ENCODE measurements at regions of chr14 and their contacts with region 1.

Region 1: DNA sequence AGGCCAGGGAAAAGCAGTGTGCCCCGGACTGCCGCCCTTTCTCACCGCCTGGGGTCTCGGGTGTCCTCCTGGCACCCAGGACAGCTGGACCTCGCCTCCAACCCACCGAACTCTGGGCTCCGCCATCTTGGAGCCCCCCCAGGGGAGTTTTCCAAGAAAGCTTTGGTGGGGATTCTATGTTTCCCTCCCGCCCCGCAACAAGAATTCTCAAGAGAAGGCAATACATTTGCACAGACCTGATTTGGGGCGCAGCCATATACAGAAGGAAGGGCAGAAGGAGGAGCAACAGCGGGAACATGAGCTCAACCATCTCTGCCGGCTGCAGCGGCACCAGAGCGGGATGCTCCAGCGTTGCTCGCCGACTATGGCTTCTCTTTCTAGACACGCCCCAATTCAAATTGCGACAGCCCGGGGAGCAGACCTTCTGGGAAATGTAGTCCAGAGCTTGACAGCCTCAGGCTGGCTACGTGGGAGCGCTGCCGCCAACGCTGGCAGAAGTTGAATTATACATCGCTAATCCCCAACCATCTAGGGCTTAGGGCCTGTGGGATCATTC is at the start of gene RDH11:
- DNase-seq: peak; percentile 88
- H3K4me3 ChIP-seq: peak within 1 kb of the TSS; percentile 69 to 93 (median 77)
- H3K27ac ChIP-seq: peak within 1 kb of the TSS; percentile 97
- H3K4me1 ChIP-seq: peaks cover 22% of the 10 kb centered on the region
- H3K27me3 ChIP-seq: no peaks in the 10 kb centered on the region
- CTCF ChIP-seq: no peak
- total RNA-seq, gene RDH11: 99.1 to 145 TPM

Region 2: GRCh38 chr14:67411820-67412421 is 283.6 kb before region 1 on chr14 and contains the start of gene PLEK2:
- CTCF ChIA-PET with region 1: no interaction called
- dilution Hi-C with region 1: loop called (anchors 5 kb)
- in situ Hi-C with region 1: loop called in 1 of 2 experiments (anchors 25 kb)
- intact Hi-C with region 1: no loop called
- DNase-seq: peak; percentile 92
- H3K4me3 ChIP-seq: peak within 1 kb of the TSS; percentile 58 to 92 (median 76)
- H3K27ac ChIP-seq: peak within 1 kb of the TSS; percentile 89
- H3K4me1 ChIP-seq: peaks cover 43% of the 10 kb centered on the region
- H3K27me3 ChIP-seq: no peaks in the 10 kb centered on the region
- CTCF ChIP-seq: no peak
- total RNA-seq, gene PLEK2: 9.8 to 152 TPM

Region 3: GRCh38 chr14:67420102-67420830 is 275.2 kb before region 1 on chr14:
- CTCF ChIA-PET with region 1: no interaction called
- dilution Hi-C with region 1: no loop called
- in situ Hi-C with region 1: loop called in 1 of 2 experiments (anchors 25 kb)
- intact Hi-C with region 1: no loop called
- DNase-seq: peak; percentile 14
- H3K4me3 ChIP-seq: no peak overlapping the region
- H3K27ac ChIP-seq: no peak overlapping the region
- H3K4me1 ChIP-seq: peaks cover 23% of the 10 kb centered on the region
- H3K27me3 ChIP-seq: no peaks in the 10 kb centered on the region
- CTCF ChIP-seq: peak; percentile 14 to 23

Region 4: GRCh38 chr14:67619446-67620216 is 75.8 kb before region 1 on chr14 and contains the start of gene ARG2:
- CTCF ChIA-PET with region 1: no interaction called
- dilution Hi-C with region 1: no loop called
- in situ Hi-C with region 1: loop called in 1 of 2 experiments (anchors 10 kb)
- intact Hi-C with region 1: loop called (anchors 2 kb)
- DNase-seq: peak; percentile 95
- H3K4me3 ChIP-seq: peak within 1 kb of the TSS; percentile 73 to 85 (median 81)
- H3K27ac ChIP-seq: peak within 1 kb of the TSS; percentile 69
- H3K4me1 ChIP-seq: peaks cover 28% of the 10 kb centered on the region
- H3K27me3 ChIP-seq: no peaks in the 10 kb centered on the region
- CTCF ChIP-seq: peak in 1 of 2 donors; percentile 13
- total RNA-seq, gene ARG2: 5.0 to 19.1 TPM

Region 5: GRCh38 chr14:67674481-67675169 is 20.8 kb before region 1 on chr14 and contains the start of gene VTI1B:
- CTCF ChIA-PET with region 1: no interaction called
- dilution Hi-C with region 1: no loop called
- in situ Hi-C with region 1: no loop called
- intact Hi-C with region 1: loop called (anchors 2 kb)
- DNase-seq: peak; percentile 73
- H3K4me3 ChIP-seq: peak within 1 kb of the TSS; percentile 75 to 95 (median 93)
- H3K27ac ChIP-seq: peak within 1 kb of the TSS; percentile 89
- H3K4me1 ChIP-seq: peaks cover 20% of the 10 kb centered on the region
- H3K27me3 ChIP-seq: no peaks in the 10 kb centered on the region
- CTCF ChIP-seq: peak in 1 of 2 donors; percentile 23
- total RNA-seq, gene VTI1B: 37.3 to 72.8 TPM

Region 6: DNA sequence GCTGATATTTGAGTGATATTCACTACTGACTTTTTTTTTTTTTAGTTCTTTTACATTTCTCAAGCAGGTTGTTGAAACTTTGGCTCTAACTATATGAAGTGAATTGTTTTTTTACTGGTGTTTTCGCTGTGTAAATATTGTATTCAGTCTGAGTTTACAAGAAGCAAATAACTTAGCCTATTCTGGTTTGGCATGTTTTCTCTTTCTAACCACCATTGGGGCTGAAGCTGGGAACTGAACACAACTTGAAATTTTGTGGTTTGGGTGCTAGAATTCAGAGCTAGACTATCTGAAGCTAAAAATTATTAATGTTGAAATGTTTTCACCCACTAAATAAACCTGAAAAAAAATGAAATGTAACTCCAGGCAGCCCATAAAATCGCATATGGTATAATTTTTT is 161.3 kb after region 1 on chr14:
- CTCF ChIA-PET with region 1: no interaction called
- dilution Hi-C with region 1: no loop called
- in situ Hi-C with region 1: no loop called
- intact Hi-C with region 1: no loop called
- DNase-seq: no peak
- H3K4me3 ChIP-seq: no peak overlapping the region
- H3K27ac ChIP-seq: no peak overlapping the region
- H3K4me1 ChIP-seq: no peaks in the 10 kb centered on the region
- H3K27me3 ChIP-seq: no peaks in the 10 kb centered on the region
- CTCF ChIP-seq: no peak

Measured in mammary epithelial cell (primary cell).